CD4-positive, alpha-beta T cell (primary cell): ENCODE measurements at regions of chr7 and their contacts with region 1.

Region 1: GRCh38 chr7:156907656-156908055 is 14.7 kb upstream of the LMBR1 start:
- DNase-seq: no peak
- ATAC-seq: no peak
- H3K4me3 ChIP-seq: no peak overlapping the region
- H3K4me3 Mint-ChIP-seq: no peak overlapping the region
- H3K27ac ChIP-seq: no peak overlapping the region
- H3K27ac Mint-ChIP-seq: no peak overlapping the region
- H3K4me1 ChIP-seq: peaks cover 13% of the 10 kb centered on the region
- H3K4me1 Mint-ChIP-seq: peaks cover 14% of the 10 kb centered on the region
- H3K27me3 ChIP-seq: no peaks in the 10 kb centered on the region
- H3K27me3 Mint-ChIP-seq: peaks cover 12% of the 10 kb centered on the region
- CTCF ChIP-seq: no peak

Region 2: DNA sequence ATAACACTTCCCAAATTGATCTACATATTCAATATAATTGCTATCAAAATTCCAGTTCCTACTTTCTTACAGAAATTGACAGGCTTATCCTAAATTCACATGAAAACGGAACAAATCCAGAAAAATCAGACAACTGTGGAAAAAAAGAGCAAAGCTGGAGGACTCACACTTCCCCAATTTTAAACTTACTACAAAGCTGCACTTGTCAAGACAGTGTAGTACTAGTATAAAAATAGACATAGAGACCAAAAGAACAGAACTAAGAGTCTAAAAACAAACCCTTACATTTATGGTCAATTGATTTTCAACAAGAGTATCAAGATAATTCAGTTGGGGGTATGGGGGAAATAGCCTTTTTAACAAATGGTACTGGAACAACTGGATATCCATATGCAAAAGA is 42.2 kb before region 1 on chr7:
- CTCF ChIA-PET with region 1: no interaction called
- POLR2A ChIA-PET with region 1: no interaction called
- intact Hi-C with region 1: no loop called
- DNase-seq: no peak
- ATAC-seq: no peak
- H3K4me3 ChIP-seq: no peak overlapping the region
- H3K4me3 Mint-ChIP-seq: no peak overlapping the region
- H3K27ac ChIP-seq: no peak overlapping the region
- H3K27ac Mint-ChIP-seq: no peak overlapping the region
- H3K4me1 ChIP-seq: no peaks in the 10 kb centered on the region
- H3K4me1 Mint-ChIP-seq: peaks cover 32% of the 10 kb centered on the region
- H3K27me3 ChIP-seq: no peaks in the 10 kb centered on the region
- H3K27me3 Mint-ChIP-seq: no peaks in the 10 kb centered on the region
- CTCF ChIP-seq: no peak

Region 3: DNA sequence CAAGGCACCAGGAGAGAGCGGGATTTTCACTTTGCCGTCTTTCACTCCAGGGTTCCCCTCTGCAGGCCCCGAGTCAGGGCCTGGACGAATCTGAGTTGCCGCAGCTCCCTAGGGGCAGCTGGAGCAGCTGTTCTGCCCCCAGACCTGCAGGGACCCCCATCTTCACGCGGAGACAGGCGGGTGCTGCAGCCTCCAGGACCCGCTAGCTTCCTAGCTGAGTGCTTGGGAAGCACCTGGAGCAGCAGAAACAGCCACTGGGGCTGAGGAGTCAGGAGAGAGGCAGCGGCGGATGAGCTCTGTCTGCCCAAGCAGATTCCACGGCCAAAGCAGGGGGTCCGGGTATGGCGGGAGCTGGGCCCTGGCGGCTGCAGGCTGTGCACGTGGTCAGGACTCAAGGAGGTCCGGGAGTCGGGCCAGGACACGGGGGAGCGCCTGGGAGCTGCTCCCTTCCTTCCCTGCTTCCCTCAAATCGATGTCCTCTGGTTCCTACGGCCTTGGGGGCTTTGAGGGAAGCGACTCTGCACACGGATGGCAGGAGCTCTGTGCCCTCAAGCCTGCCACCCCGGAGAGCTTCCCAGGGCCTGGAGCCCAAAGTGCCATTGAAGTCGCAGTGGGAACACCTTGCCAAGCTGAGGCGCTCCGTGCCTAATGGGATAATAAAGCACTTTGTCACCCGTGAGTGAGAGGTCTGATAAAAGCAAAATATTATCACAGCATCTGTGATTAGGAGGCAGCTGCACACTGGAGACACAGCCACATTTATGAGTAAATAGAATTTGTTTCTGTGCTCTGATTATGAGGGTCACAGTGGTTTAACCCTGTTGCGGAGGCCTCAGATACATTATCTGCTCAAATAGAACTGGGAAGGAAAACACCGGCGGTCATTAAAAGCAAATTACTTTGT is 85.6 kb after region 1 on chr7:
- CTCF ChIA-PET with region 1: no interaction called
- POLR2A ChIA-PET with region 1: no interaction called
- intact Hi-C with region 1: no loop called
- DNase-seq: no peak
- ATAC-seq: no peak
- H3K4me3 ChIP-seq: no peak overlapping the region
- H3K4me3 Mint-ChIP-seq: no peak overlapping the region
- H3K27ac ChIP-seq: no peak overlapping the region
- H3K27ac Mint-ChIP-seq: no peak overlapping the region
- H3K4me1 ChIP-seq: no peaks in the 10 kb centered on the region
- H3K4me1 Mint-ChIP-seq: no peaks in the 10 kb centered on the region
- H3K27me3 ChIP-seq: peaks cover 22 to 45% of the 10 kb centered on the region in 2 experiments
- H3K27me3 Mint-ChIP-seq: peaks cover 51% of the 10 kb centered on the region
- CTCF ChIP-seq: no peak

Region 4: DNA sequence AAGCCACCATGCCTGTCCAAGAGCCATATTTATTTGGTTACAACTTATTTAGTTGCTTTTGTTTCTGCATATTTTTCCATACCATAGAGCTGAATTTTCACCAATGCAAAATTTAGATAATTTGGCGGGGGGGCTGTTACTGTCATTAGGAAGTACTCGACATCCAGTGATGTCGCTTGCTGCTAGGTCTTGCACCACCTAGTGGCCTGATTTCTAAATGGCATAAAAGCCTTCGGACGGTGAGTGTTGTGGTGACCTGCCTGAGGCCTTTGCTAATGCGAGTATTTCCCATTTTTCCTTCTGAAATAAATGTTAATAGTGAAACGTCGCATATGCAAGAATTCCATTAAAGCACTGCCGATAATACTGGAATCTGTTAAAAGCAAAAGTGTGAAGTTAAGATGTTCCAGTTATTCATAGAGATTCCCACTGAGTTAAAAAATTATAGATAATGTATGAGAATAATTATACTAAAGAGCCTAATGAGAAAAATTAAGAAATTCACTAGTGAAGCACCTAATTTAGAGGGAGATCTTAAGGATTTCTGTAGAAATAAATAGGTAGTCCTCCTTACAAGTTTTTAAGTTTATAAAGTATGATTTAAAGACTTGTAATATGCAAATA is 343.1 kb after region 1 on chr7:
- CTCF ChIA-PET with region 1: no interaction called
- POLR2A ChIA-PET with region 1: no interaction called
- intact Hi-C with region 1: loop called in 1 of 2 experiments (anchors 5 kb)
- DNase-seq: peak in 12 of 14 experiments; percentile 14 to 78 (median 28)
- ATAC-seq: peak; percentile 72
- H3K4me3 ChIP-seq: no peak overlapping the region
- H3K4me3 Mint-ChIP-seq: no peak overlapping the region
- H3K27ac ChIP-seq: no peak overlapping the region
- H3K27ac Mint-ChIP-seq: no peak overlapping the region
- H3K4me1 ChIP-seq: no peaks in the 10 kb centered on the region
- H3K4me1 Mint-ChIP-seq: no peaks in the 10 kb centered on the region
- H3K27me3 ChIP-seq: no peaks in the 10 kb centered on the region
- H3K27me3 Mint-ChIP-seq: no peaks in the 10 kb centered on the region
- CTCF ChIP-seq: peak; percentile 91